ENCODE measurements at regions of chr11 and their contacts with region 1.

Region 1: DNA sequence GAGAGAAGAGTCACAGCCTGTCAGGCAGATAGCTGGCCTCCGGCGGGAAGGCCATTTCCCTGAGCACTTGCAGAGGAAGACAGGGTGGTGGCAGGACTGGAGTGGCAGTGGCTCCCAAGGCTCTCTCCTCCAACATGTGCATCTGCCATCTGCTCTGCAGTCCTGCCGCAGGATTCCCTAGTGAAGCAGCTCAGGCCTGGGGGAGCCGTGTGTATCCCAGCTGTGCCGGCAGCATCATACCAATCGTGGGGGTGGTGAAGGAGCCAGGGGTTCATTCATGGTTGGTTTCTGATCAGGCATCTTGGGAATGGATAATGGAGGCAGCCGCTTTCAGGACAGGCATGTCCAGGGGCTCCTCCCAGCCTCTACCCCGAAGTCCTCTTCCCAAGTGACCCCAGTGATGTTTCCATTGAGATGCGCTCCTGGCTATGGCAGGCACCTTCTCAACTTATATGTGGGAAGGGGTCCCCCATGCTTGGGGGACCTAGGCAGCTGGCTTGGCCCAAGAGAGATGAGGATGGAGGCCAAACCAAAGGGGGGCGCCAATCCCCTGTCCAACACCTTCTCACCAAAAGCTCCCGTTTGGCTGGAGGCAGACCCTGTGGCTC is 6.1 kb downstream of the TAGLN start:
- DNase-seq: no peak
- ATAC-seq: no peak
- H3K4me3 ChIP-seq: no peak overlapping the region
- H3K27ac ChIP-seq: peak overlapping the region in 9 of 10 donors; percentile 11 to 92 (median 41)
- H3K4me1 ChIP-seq: peaks cover 0 to 49% (median 23%) of the 10 kb centered on the region in 9 donors
- H3K27me3 ChIP-seq: no peaks in the 10 kb centered on the region
- CTCF ChIP-seq: no peak

Region 2: DNA sequence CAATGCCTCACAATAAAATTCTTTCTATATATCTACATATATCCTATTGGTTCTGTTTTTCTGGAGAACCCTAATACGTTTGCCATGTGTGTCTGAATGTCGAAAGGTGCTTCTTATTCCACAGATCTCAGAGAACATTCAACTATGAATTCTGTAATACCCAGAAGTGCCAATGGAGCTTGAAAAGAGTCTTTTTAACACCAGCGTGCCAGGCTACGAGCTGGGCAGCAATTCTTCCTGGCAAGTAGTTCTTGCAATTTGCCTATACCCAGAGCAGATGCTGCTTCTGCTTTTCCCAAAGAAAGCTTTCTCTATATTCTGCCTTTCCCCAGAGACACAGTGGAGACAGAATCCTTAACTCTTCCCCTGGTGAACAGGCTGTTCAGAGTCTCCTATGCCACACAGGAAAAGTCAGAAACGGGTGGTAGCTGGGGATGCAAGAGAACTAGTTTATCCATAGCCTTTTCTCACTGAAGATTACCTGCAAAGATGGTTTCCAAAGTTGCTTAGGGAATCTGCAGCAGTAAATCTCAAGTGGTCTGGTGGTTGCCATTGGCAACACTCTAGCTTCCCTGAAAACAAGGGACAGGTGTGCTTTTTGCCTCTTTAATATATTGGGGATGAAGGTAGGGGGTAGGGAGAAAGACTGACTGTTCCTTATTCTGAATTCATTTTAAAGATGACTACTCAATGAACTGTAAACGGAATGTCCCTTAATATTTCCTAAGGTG is 78.0 kb before region 1 on chr11:
- intact Hi-C with region 1: loop called in 5 of 10 experiments (anchors 2 to 5 kb)
- DNase-seq: no peak
- ATAC-seq: no peak
- H3K4me3 ChIP-seq: no peak overlapping the region
- H3K27ac ChIP-seq: no peak overlapping the region
- H3K4me1 ChIP-seq: no peaks in the 10 kb centered on the region
- H3K27me3 ChIP-seq: no peaks in the 10 kb centered on the region
- CTCF ChIP-seq: no peak

Region 3: GRCh38 chr11:117134431-117134830 is 70.9 kb before region 1 on chr11:
- intact Hi-C with region 1: loop called in 5 of 10 experiments (anchors 2 to 5 kb)
- DNase-seq: no peak
- ATAC-seq: no peak
- H3K4me3 ChIP-seq: no peak overlapping the region
- H3K27ac ChIP-seq: no peak overlapping the region
- H3K4me1 ChIP-seq: peaks cover 0 to 2% (median 0%) of the 10 kb centered on the region in 9 donors
- H3K27me3 ChIP-seq: no peaks in the 10 kb centered on the region
- CTCF ChIP-seq: no peak

Measured in heart right ventricle (tissue), 16 donors.